ENCODE measurements at regions of chr12 and their contacts with region 1.

Region 1: GRCh38 chr12:4044736-4045730 is 171.8 kb upstream of the PARP11 start:
- DNase-seq: no peak
- ATAC-seq: no peak
- H3K4me3 ChIP-seq: no peak overlapping the region
- H3K27ac ChIP-seq: no peak overlapping the region
- H3K4me1 ChIP-seq: no peaks in the 10 kb centered on the region
- H3K27me3 ChIP-seq: no peaks in the 10 kb centered on the region
- CTCF ChIP-seq: no peak
- POLR2A ChIP-seq: no peak

Region 2: GRCh38 chr12:3892631-3893030 is 152.4 kb before region 1 on chr12:
- intact Hi-C with region 1: loop called in 1 of 2 experiments (anchors 5 kb)
- DNase-seq: no peak
- ATAC-seq: no peak
- H3K4me3 ChIP-seq: no peak overlapping the region
- H3K27ac ChIP-seq: no peak overlapping the region
- H3K4me1 ChIP-seq: no peaks in the 10 kb centered on the region
- H3K27me3 ChIP-seq: no peaks in the 10 kb centered on the region
- CTCF ChIP-seq: no peak
- POLR2A ChIP-seq: no peak

Region 3: GRCh38 chr12:3951380-3952135 is 93.5 kb before region 1 on chr12:
- intact Hi-C with region 1: no loop called
- DNase-seq: no peak
- ATAC-seq: no peak
- H3K4me3 ChIP-seq: no peak overlapping the region
- H3K27ac ChIP-seq: no peak overlapping the region
- H3K4me1 ChIP-seq: no peaks in the 10 kb centered on the region
- H3K27me3 ChIP-seq: no peaks in the 10 kb centered on the region
- CTCF ChIP-seq: no peak
- POLR2A ChIP-seq: no peak

Region 4: GRCh38 chr12:3998968-3999826 is 45.8 kb before region 1 on chr12:
- intact Hi-C with region 1: loop called in 1 of 2 experiments (anchors 5 kb)
- DNase-seq: no peak
- ATAC-seq: peak in 2 of 4 donors; percentile 65
- H3K4me3 ChIP-seq: no peak overlapping the region
- H3K27ac ChIP-seq: no peak overlapping the region
- H3K4me1 ChIP-seq: no peaks in the 10 kb centered on the region
- H3K27me3 ChIP-seq: no peaks in the 10 kb centered on the region
- CTCF ChIP-seq: no peak
- POLR2A ChIP-seq: no peak

Region 5: DNA sequence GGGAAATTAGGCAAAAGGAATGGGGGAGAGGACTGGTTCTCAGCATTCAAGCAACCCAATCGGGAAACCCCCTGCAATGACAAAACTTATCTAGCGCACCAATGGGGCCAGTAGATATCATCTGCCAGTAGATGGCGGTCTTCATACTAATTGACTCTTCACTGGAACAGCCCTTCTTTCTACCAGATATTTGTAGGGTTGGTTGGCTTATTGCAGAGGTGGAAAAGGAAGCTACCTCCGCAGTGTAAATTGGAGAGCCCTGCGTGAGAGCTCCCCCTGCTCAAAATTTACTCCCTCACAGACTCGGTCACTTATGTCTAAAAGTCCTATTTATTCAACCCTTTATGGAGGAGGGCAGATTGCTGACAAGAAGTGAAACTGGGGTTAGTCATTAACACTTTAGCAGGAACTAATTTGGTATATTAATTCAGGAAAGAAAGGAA is 62.4 kb after region 1 on chr12:
- intact Hi-C with region 1: no loop called
- DNase-seq: peak in 1 of 3 donors; percentile 40
- ATAC-seq: peak; percentile 77 to 90 (median 86)
- H3K4me3 ChIP-seq: no peak overlapping the region
- H3K27ac ChIP-seq: no peak overlapping the region
- H3K4me1 ChIP-seq: no peaks in the 10 kb centered on the region
- H3K27me3 ChIP-seq: no peaks in the 10 kb centered on the region
- CTCF ChIP-seq: peak; percentile 33 to 67 (median 64)
- POLR2A ChIP-seq: no peak

Measured in right lobe of liver (tissue), 6 donors.